Heart right ventricle (tissue), 16 donors: ENCODE measurements at regions of chr5 and their contacts with region 1.

Region 1: GRCh38 chr5:159100025-159100781 is 487 bp upstream of the EBF1 start:
- DNase-seq: peak; percentile 92 to 93
- ATAC-seq: peak; percentile 89 to 95 (median 92)
- H3K4me3 ChIP-seq: peak overlapping the region; percentile 56 to 78 (median 70)
- H3K27ac ChIP-seq: peak overlapping the region; percentile 81 to 96 (median 91)
- H3K4me1 ChIP-seq: peaks cover 3 to 71% (median 39%) of the 10 kb centered on the region in 9 donors
- H3K27me3 ChIP-seq: peaks cover 0 to 96% (median 42%) of the 10 kb centered on the region in 7 donors
- CTCF ChIP-seq: no peak

Region 2: DNA sequence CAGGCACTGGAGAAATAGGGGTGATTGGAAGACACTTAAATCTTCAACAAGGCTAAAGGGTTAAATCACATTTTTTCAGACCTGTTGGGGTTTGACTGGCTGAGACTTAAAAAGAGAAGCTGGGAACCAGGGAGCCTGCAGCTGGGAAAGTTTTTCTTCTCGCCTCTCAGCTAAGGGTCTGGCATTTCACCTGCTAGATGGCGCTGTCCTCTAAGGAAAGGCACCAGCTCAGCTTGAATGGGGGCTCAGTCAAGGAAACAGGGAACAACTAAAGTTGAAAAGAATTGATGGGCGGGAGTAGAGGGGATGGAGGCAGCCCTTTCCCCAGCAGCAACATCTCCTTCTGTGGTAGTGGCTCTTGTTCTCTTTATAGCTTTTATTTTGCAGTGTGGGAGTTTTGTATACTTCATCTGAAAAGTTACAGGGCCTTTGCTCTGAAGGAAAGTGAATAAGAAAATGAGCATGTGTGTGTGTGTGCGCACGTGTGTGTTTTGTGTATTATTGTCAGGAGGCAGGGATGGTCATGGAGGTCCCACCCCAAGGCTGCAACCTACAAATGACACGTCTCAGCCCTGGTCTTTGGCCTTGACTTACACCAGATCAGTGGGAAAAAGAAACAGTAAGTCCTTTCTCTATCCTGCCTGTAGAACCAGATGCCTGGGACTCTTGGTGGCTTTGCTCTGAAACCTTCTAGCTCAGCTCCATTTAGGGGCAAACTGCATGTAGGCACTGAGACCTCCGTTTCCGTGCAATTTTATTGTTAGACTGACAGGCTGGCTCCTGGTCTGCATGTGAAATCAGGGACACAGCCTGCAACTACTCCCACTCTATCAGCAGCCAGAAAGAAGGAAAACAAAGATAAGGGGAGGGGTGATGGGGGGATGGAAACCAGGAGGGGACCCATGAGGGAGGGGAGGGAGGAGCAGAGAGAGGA is 925.0 kb before region 1 on chr5:
- intact Hi-C with region 1: loop called in 7 of 10 experiments (anchors 2 to 5 kb)
- DNase-seq: peak; percentile 62 to 87
- ATAC-seq: peak; percentile 75 to 95 (median 92)
- H3K4me3 ChIP-seq: no peak overlapping the region
- H3K27ac ChIP-seq: peak overlapping the region in 9 of 10 donors; percentile 4 to 80 (median 69)
- H3K4me1 ChIP-seq: peaks cover 0 to 27% (median 14%) of the 10 kb centered on the region in 9 donors
- H3K27me3 ChIP-seq: no peaks in the 10 kb centered on the region
- CTCF ChIP-seq: peak; percentile 55 to 89 (median 81)

Region 3: GRCh38 chr5:158777647-158778350 is 322.4 kb before region 1 on chr5:
- intact Hi-C with region 1: loop called in 1 of 10 experiments (anchors 5 kb)
- DNase-seq: no peak
- ATAC-seq: peak; percentile 17 to 53 (median 38)
- H3K4me3 ChIP-seq: no peak overlapping the region
- H3K27ac ChIP-seq: peak overlapping the region; percentile 15 to 69 (median 48)
- H3K4me1 ChIP-seq: peaks cover 0 to 62% (median 39%) of the 10 kb centered on the region in 9 donors
- H3K27me3 ChIP-seq: no peaks in the 10 kb centered on the region
- CTCF ChIP-seq: no peak

Region 4: GRCh38 chr5:158807946-158808345 is 292.3 kb before region 1 on chr5:
- intact Hi-C with region 1: loop called in 1 of 10 experiments (anchors 5 kb)
- DNase-seq: no peak
- ATAC-seq: peak in 3 of 8 donors; percentile 18 to 70 (median 61)
- H3K4me3 ChIP-seq: no peak overlapping the region
- H3K27ac ChIP-seq: peak overlapping the region in 3 of 10 donors; percentile 18 to 41 (median 35)
- H3K4me1 ChIP-seq: peaks cover 0 to 80% (median 37%) of the 10 kb centered on the region in 9 donors
- H3K27me3 ChIP-seq: no peaks in the 10 kb centered on the region
- CTCF ChIP-seq: no peak

Region 5: GRCh38 chr5:158943057-158943456 is 157.1 kb before region 1 on chr5:
- intact Hi-C with region 1: loop called in 1 of 10 experiments (anchors 5 kb)
- DNase-seq: peak; percentile 29 to 30
- ATAC-seq: peak in 3 of 8 donors; percentile 28 to 82 (median 61)
- H3K4me3 ChIP-seq: no peak overlapping the region
- H3K27ac ChIP-seq: no peak overlapping the region
- H3K4me1 ChIP-seq: peaks cover 0 to 53% (median 12%) of the 10 kb centered on the region in 9 donors
- H3K27me3 ChIP-seq: no peaks in the 10 kb centered on the region
- CTCF ChIP-seq: no peak

Region 6: GRCh38 chr5:159003037-159004030 is 96.9 kb before region 1 on chr5:
- intact Hi-C with region 1: loop called in 2 of 10 experiments (anchors 5 to 10 kb)
- DNase-seq: no peak
- ATAC-seq: peak in 7 of 8 donors; percentile 35 to 68 (median 60)
- H3K4me3 ChIP-seq: peak overlapping the region in 1 of 10 donors; percentile 6
- H3K27ac ChIP-seq: peak overlapping the region in 7 of 10 donors; percentile 34 to 91 (median 52)
- H3K4me1 ChIP-seq: peaks cover 6 to 92% (median 46%) of the 10 kb centered on the region in 9 donors
- H3K27me3 ChIP-seq: no peaks in the 10 kb centered on the region
- CTCF ChIP-seq: no peak

Region 7: DNA sequence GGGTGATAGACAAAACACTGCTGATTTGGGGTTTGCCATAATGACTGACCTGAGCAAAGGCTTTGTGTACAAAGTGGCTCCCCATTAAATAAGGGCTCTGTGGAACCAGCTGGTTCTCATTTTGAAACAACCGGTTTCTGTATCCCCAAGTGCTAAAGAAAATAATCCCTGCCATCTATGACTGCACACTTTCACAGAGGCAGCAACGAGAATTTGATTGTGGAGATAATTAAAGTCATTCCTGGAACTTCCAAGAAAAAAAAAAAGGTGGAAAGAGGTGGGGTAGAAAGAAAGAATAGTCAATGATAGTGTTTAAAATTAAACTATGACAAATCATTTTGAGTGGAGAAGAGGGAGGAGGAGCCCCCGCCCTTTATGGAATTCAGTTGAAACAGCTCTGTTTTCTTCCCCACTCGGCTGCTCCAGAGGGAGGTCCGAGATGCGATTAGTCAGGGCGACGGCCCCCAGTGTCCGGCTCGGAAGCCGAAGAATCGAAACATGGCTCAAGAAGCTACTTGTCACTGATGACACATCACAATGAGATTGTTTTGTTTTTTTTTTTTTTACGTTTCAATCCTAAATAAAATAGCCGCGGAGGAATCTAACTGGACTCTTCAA is 38.9 kb before region 1 on chr5:
- intact Hi-C with region 1: loop called in 1 of 10 experiments (anchors 5 kb)
- DNase-seq: peak; percentile 52 to 64
- ATAC-seq: peak; percentile 77 to 95 (median 88)
- H3K4me3 ChIP-seq: peak overlapping the region in 8 of 10 donors; percentile 8 to 43 (median 32)
- H3K27ac ChIP-seq: peak overlapping the region in 9 of 10 donors; percentile 29 to 86 (median 63)
- H3K4me1 ChIP-seq: peaks cover 0 to 68% (median 41%) of the 10 kb centered on the region in 9 donors
- H3K27me3 ChIP-seq: peaks cover 0 to 4% (median 0%) of the 10 kb centered on the region in 7 donors
- CTCF ChIP-seq: no peak